ENCODE measurements at regions of chr17 and their contacts with region 1.

Region 1: GRCh38 chr17:77088455-77089123 is 52.2 kb upstream of the SEC14L1 start:
- DNase-seq: peak; percentile 97

Region 2: GRCh38 chr17:77140166-77140878 is 51.7 kb after region 1 on chr17:
- intact Hi-C with region 1: loop called (anchors 2 kb)
- DNase-seq: peak; percentile 100

Region 3: GRCh38 chr17:77247048-77247541 is 158.5 kb after region 1 on chr17:
- intact Hi-C with region 1: loop called (anchors 1 kb)
- DNase-seq: peak; percentile 92